G401 (cell line): ENCODE measurements at regions of chr18 and their contacts with region 1.

Region 1: GRCh38 chr18:3498698-3499471 is 48.9 kb downstream of the TGIF1 start:
- DNase-seq: no peak

Region 2: GRCh38 chr18:3454365-3455089 is 44.4 kb before region 1 on chr18:
- in situ Hi-C with region 1: no loop called
- DNase-seq: peak; percentile 47

Region 3: GRCh38 chr18:3585656-3586509 is 87.0 kb after region 1 on chr18:
- in situ Hi-C with region 1: loop called (anchors 10 kb)
- DNase-seq: peak; percentile 56

Region 4: GRCh38 chr18:3760741-3761140 is 261.9 kb after region 1 on chr18:
- in situ Hi-C with region 1: no loop called
- DNase-seq: no peak